ENCODE measurements at regions of chr6 and their contacts with region 1.

Region 1: GRCh38 chr6:142885182-142885867 is 59.7 kb downstream of the HIVEP2 start:
- DNase-seq: peak; percentile 69
- H3K4me3 ChIP-seq: peak overlapping the region; percentile 35
- H3K27ac ChIP-seq: peak overlapping the region; percentile 13
- H3K4me1 ChIP-seq: peaks cover 49% of the 10 kb centered on the region
- CTCF ChIP-seq: no peak

Region 2: GRCh38 chr6:142692942-142693341 is 192.4 kb before region 1 on chr6:
- CTCF ChIA-PET with region 1: no interaction called
- POLR2A ChIA-PET with region 1: no interaction called
- intact Hi-C with region 1: loop called (anchors 2 kb)
- DNase-seq: peak; percentile 70
- H3K4me3 ChIP-seq: no peak overlapping the region
- H3K27ac ChIP-seq: no peak overlapping the region
- H3K4me1 ChIP-seq: no peaks in the 10 kb centered on the region
- CTCF ChIP-seq: peak; percentile 98

Region 3: GRCh38 chr6:142845624-142846458 is 39.5 kb before region 1 on chr6:
- CTCF ChIA-PET with region 1: no interaction called
- POLR2A ChIA-PET with region 1: interaction called, 10 read pairs
- intact Hi-C with region 1: loop called (anchors 5 kb)
- DNase-seq: peak; percentile 54
- H3K4me3 ChIP-seq: peak overlapping the region; percentile 64
- H3K27ac ChIP-seq: peak overlapping the region; percentile 65
- H3K4me1 ChIP-seq: peaks cover 98% of the 10 kb centered on the region
- CTCF ChIP-seq: 0 out of 2 replicates have a peak, but pooled peaks have one; percentile 21

Region 4: GRCh38 chr6:142863981-142864380 is 21.3 kb before region 1 on chr6:
- CTCF ChIA-PET with region 1: interaction called, 3 read pairs
- POLR2A ChIA-PET with region 1: interaction called, 10 read pairs
- intact Hi-C with region 1: no loop called
- DNase-seq: no peak
- H3K4me3 ChIP-seq: no peak overlapping the region
- H3K27ac ChIP-seq: no peak overlapping the region
- H3K4me1 ChIP-seq: peaks cover 64% of the 10 kb centered on the region
- CTCF ChIP-seq: 0 out of 2 replicates have a peak, but pooled peaks have one; percentile 15

Region 5: DNA sequence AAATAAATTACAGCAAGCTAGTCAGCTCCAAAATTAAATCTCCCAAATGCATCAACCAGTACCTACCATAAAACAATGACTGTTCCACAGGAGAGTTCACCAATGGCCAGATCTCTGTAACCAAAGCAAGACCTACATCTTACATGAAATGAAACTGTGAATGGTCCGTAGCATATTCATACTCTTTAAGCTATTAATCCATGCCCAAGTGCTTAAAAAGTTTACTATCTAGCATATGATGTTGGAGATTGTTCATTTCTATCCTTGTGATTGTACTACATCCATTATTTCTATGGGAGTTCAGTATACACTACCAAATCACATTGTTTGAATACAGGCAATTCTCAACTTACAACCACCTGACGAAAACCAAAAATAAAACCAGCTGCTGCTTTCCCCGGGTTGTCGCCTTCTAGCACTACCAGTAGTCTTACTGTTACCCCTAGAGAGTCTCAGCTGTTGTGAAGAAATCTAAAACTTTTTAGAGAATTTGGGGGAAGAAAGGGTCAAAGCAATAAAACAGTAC is 21.7 kb after region 1 on chr6:
- CTCF ChIA-PET with region 1: no interaction called
- POLR2A ChIA-PET with region 1: interaction called, 13 read pairs
- intact Hi-C with region 1: no loop called
- DNase-seq: peak; percentile 33
- H3K4me3 ChIP-seq: peak overlapping the region; percentile 37
- H3K27ac ChIP-seq: peak overlapping the region; percentile 32
- H3K4me1 ChIP-seq: peaks cover 21% of the 10 kb centered on the region
- CTCF ChIP-seq: no peak

Region 6: DNA sequence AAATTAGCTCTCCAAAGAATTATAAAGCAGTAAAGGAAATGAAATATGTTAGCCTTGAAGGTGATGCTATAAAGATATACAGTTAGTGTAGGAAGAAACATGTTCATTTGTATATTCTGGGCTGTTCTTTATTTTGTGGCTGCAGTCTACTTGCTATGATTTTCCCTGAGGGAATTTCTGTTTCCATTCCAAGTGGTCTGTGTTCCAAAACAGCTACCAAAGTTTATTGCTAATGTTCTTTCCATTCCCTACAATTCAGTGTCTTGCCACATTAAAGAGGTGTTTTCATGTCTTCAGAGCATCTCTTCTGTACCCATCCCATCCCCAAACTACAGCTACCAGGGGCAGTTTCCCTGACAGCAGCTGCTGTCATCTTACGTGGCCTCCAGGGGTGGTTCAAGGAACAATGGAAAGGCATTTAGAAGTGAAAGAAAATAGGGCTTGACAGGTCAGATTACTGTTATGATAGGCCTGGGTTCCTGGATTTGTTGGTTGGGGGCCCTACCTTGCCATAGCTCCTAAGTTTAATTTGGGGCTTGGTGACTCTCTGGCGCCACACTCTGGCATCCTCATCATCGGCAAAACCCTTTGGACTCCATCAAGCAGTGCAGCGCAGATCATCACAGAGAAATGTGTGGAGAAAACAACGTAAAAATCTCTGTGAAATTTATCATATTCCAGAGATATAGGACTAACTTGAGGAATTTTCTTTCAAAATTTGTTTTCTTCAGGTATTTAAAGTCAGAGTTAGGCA is 141.5 kb after region 1 on chr6:
- CTCF ChIA-PET with region 1: no interaction called
- POLR2A ChIA-PET with region 1: no interaction called
- intact Hi-C with region 1: loop called (anchors 2 kb)
- DNase-seq: peak; percentile 56
- H3K4me3 ChIP-seq: no peak overlapping the region
- H3K27ac ChIP-seq: no peak overlapping the region
- H3K4me1 ChIP-seq: no peaks in the 10 kb centered on the region
- CTCF ChIP-seq: peak; percentile 92

Region 7: DNA sequence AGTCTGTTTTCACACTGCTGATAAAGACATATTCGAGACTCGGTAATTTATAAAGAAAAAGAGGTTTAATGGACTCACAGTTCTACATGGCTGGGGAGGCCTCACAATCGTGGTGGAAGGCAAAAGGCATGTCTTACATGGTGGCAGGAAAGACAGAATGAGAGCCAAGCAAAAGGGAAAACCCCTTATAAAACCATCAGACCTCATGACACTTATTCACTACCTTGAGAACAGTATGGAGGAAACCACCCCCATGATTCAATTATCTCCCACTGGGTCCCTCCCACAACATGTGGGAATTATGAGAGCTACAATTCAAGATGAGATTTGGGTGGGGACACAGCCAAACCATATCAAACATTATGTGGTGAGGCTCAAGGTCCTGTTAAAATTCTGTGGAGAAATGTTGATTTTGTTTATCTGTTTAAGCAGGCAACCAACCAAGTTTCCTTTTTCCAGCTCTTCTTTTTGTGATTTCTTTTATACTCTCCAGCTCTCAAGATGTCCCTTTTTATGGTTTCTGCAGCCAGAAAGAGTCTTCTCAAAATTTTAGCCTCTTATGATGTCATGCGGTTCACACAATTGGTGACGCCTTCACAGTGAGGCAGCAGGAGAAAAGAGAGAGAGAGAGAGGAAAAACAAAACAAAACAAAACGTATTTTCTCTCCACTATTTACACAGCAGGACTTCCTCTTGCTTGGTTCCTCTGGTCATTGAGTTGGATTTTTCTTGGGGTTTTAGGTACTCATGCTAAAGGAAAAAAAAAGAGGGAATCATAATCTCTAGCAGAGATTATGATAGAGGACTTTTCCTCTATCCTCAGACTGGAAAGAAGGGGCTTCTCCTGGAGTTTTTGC is 193.4 kb after region 1 on chr6:
- CTCF ChIA-PET with region 1: no interaction called
- POLR2A ChIA-PET with region 1: no interaction called
- intact Hi-C with region 1: no loop called
- DNase-seq: no peak
- H3K4me3 ChIP-seq: no peak overlapping the region
- H3K27ac ChIP-seq: no peak overlapping the region
- H3K4me1 ChIP-seq: no peaks in the 10 kb centered on the region
- CTCF ChIP-seq: no peak

Measured in OCI-LY7 (cell line).